ENCODE measurements at regions of chr11 and their contacts with region 1.

Region 1: DNA sequence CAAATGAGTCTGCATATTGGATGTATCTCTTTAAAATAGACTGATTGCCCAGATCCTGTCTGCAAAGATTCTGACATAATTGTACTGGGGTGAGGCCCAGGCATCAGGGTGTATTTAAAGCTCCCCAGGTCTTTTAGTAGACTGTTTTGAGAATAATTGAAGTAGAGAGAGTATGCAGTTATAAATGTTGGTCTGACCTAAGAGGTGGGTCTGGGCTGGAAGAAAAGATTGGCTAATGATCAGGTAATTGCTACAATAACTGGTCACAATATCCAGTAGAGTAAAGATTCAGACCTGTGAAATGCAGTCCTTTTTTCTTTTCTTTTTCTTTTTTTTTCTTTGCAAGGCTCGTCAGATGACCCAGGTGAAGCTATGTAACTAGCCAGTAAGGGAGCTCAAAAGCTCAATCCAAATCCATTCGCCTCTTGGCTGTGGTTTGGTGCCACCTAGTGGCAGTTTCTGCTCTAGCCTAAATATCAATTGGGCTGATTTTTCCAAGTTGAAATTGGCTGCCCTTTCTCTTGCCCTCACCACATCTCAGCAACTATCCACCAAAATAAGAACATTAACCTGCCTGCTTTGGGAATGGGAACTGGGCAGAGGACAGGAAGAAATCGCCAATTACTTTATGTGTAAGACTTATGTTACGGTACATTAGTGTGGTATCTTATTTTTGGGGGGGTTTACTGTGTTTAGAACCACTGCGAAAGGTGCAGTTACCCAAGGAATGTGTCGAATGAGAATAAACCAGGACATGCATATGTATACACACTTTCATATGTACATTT is 45.9 kb downstream of the ZNF143 start:
- DNase-seq: peak; percentile 58 to 85 (median 69)
- ATAC-seq: peak; percentile 87
- H3K4me3 ChIP-seq: no peak overlapping the region
- H3K4me3 Mint-ChIP-seq: no peak overlapping the region
- H3K27ac ChIP-seq: no peak overlapping the region
- H3K27ac Mint-ChIP-seq: no peak overlapping the region
- H3K4me1 ChIP-seq: no peaks in the 10 kb centered on the region
- H3K4me1 Mint-ChIP-seq: peaks cover 8% of the 10 kb centered on the region
- H3K27me3 ChIP-seq: no peaks in the 10 kb centered on the region
- H3K27me3 Mint-ChIP-seq: no peaks in the 10 kb centered on the region
- CTCF ChIP-seq: peak; percentile 93

Region 2: GRCh38 chr11:8658321-8659057 is 848.2 kb before region 1 on chr11:
- CTCF ChIA-PET with region 1: no interaction called
- POLR2A ChIA-PET with region 1: no interaction called
- intact Hi-C with region 1: no loop called
- DNase-seq: no peak
- ATAC-seq: no peak
- H3K4me3 ChIP-seq: no peak overlapping the region
- H3K4me3 Mint-ChIP-seq: no peak overlapping the region
- H3K27ac ChIP-seq: no peak overlapping the region
- H3K27ac Mint-ChIP-seq: no peak overlapping the region
- H3K4me1 ChIP-seq: no peaks in the 10 kb centered on the region
- H3K4me1 Mint-ChIP-seq: no peaks in the 10 kb centered on the region
- H3K27me3 ChIP-seq: no peaks in the 10 kb centered on the region
- H3K27me3 Mint-ChIP-seq: no peaks in the 10 kb centered on the region
- CTCF ChIP-seq: no peak

Region 3: GRCh38 chr11:9015677-9016076 is 491.0 kb before region 1 on chr11:
- CTCF ChIA-PET with region 1: interaction called, 10 read pairs
- POLR2A ChIA-PET with region 1: no interaction called
- intact Hi-C with region 1: loop called (anchors 1 kb)
- DNase-seq: peak; percentile 31 to 81 (median 44)
- ATAC-seq: peak; percentile 84
- H3K4me3 ChIP-seq: no peak overlapping the region
- H3K4me3 Mint-ChIP-seq: no peak overlapping the region
- H3K27ac ChIP-seq: no peak overlapping the region
- H3K27ac Mint-ChIP-seq: no peak overlapping the region
- H3K4me1 ChIP-seq: peaks cover 18% of the 10 kb centered on the region
- H3K4me1 Mint-ChIP-seq: peaks cover 29% of the 10 kb centered on the region
- H3K27me3 ChIP-seq: no peaks in the 10 kb centered on the region
- H3K27me3 Mint-ChIP-seq: peaks cover 5% of the 10 kb centered on the region
- CTCF ChIP-seq: peak; percentile 76

Region 4: GRCh38 chr11:9170450-9170849 is 336.2 kb before region 1 on chr11:
- CTCF ChIA-PET with region 1: interaction called, 23 read pairs
- POLR2A ChIA-PET with region 1: no interaction called
- intact Hi-C with region 1: loop called (anchors 1 kb)
- DNase-seq: no peak
- ATAC-seq: no peak
- H3K4me3 ChIP-seq: no peak overlapping the region
- H3K4me3 Mint-ChIP-seq: no peak overlapping the region
- H3K27ac ChIP-seq: no peak overlapping the region
- H3K27ac Mint-ChIP-seq: no peak overlapping the region
- H3K4me1 ChIP-seq: no peaks in the 10 kb centered on the region
- H3K4me1 Mint-ChIP-seq: peaks cover 13% of the 10 kb centered on the region
- H3K27me3 ChIP-seq: no peaks in the 10 kb centered on the region
- H3K27me3 Mint-ChIP-seq: no peaks in the 10 kb centered on the region
- CTCF ChIP-seq: no peak

Region 5: DNA sequence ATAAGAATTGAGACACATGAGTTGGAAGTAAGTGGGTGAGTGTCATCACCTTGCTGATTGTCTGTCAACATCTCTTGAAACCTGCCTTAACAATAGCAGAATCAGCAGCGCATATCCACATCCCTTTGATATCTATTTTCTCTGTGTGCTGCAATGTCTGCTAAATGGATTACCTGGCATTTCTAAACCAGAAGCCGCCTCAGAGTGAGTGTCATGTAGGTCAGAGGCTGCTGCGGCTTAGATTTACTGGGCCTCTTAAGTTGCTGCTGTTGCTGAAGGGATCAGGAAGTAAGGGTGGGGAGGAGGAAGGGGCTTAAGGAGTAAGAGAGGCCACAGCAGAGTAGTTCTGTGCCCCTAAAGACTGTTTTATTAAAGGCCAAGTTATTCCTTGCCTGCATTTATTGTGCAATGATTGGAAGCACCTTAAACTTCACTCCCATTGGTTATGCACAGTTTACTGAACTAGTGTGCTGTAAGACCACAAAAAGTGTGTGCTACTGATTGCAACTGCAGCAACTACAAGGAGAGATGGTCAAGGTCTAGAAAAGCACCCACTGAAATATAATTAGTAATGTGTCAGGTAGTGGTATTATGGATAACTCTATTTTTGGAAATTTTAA is 162.5 kb before region 1 on chr11:
- CTCF ChIA-PET with region 1: no interaction called
- POLR2A ChIA-PET with region 1: no interaction called
- intact Hi-C with region 1: no loop called
- DNase-seq: no peak
- ATAC-seq: peak; percentile 41
- H3K4me3 ChIP-seq: no peak overlapping the region
- H3K4me3 Mint-ChIP-seq: no peak overlapping the region
- H3K27ac ChIP-seq: no peak overlapping the region
- H3K27ac Mint-ChIP-seq: peak overlapping the region; percentile 7
- H3K4me1 ChIP-seq: peaks cover 13% of the 10 kb centered on the region
- H3K4me1 Mint-ChIP-seq: peaks cover 30% of the 10 kb centered on the region
- H3K27me3 ChIP-seq: no peaks in the 10 kb centered on the region
- H3K27me3 Mint-ChIP-seq: no peaks in the 10 kb centered on the region
- CTCF ChIP-seq: no peak